HepG2 (cell line): ENCODE measurements at regions of chr14 and their contacts with region 1.

Region 1: DNA sequence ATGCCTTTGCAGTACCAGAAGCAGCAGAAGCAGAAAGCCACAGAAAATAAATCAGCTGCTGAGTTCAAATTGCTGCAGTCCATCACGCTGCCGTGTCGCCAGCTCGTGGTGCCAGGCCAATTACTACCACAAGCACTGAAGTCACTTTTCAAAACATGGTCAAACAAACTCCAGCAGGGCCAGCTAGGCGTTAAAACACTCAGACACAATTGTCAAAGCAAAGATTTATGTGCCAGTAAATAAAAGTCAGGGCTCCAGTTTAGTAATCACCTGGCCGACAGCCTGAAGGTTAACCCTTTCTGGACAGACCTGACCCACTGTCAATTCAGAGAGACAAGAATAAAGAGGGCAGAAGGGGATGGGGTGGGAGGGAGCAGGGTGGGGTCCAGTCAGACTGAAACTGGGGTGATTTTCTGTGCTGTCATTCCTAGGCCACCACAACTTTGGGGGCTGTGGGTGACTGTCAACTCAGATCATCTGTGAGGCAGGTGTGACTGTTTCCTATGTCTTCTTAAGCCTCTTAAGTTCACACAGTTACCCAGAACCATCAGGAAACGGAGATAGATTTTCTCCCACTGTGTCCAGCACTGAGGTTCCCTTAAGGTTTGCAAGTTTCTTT is 109.8 kb upstream of the FUT8 start:
- DNase-seq: no peak
- ATAC-seq: no peak; the same call in 2 of the 3 replicates
- H3K4me3 ChIP-seq: peak overlapping the region; percentile 1 to 48 (median 36); a peak in 4 of 6 replicates
- H3K27ac ChIP-seq: peak overlapping the region; percentile 39
- H3K4me1 ChIP-seq: peaks cover 57% of the 10 kb centered on the region
- H3K27me3 ChIP-seq: no peaks in the 10 kb centered on the region
- CTCF ChIP-seq: no peak
- EP300 ChIP-seq: no peak
- POLR2A ChIP-seq: no peak
- RAD21 ChIP-seq: no peak

Region 2: GRCh38 chr14:65224799-65225198 is 77.9 kb before region 1 on chr14:
- CTCF ChIA-PET with region 1: no interaction called
- POLR2A ChIA-PET with region 1: interaction called, 13 read pairs
- in situ Hi-C with region 1: no loop called
- intact Hi-C with region 1: loop called (anchors 5 kb)
- DNase-seq: no peak
- ATAC-seq: no peak
- H3K4me3 ChIP-seq: no peak overlapping the region
- H3K27ac ChIP-seq: no peak overlapping the region
- H3K4me1 ChIP-seq: peaks cover 65% of the 10 kb centered on the region
- H3K27me3 ChIP-seq: no peaks in the 10 kb centered on the region
- CTCF ChIP-seq: no peak
- EP300 ChIP-seq: no peak
- POLR2A ChIP-seq: no peak
- RAD21 ChIP-seq: no peak

Region 3: GRCh38 chr14:65229751-65230749 is 72.6 kb before region 1 on chr14:
- CTCF ChIA-PET with region 1: no interaction called
- POLR2A ChIA-PET with region 1: interaction called, 13 read pairs
- in situ Hi-C with region 1: loop called (anchors 5 kb)
- intact Hi-C with region 1: loop called (anchors 5 kb)
- DNase-seq: peak; percentile 96
- ATAC-seq: peak; percentile 44
- H3K4me3 ChIP-seq: peak overlapping the region; percentile 64 to 73 (median 67)
- H3K27ac ChIP-seq: peak overlapping the region; percentile 90
- H3K4me1 ChIP-seq: peaks cover 72% of the 10 kb centered on the region
- H3K27me3 ChIP-seq: no peaks in the 10 kb centered on the region
- CTCF ChIP-seq: no peak
- EP300 ChIP-seq: peak in 1 of 2 experiments; percentile 69; a peak in 2 of 4 replicates
- POLR2A ChIP-seq: peak; percentile 66 to 75
- RAD21 ChIP-seq: no peak

Region 4: GRCh38 chr14:65239143-65239937 is 63.3 kb before region 1 on chr14:
- CTCF ChIA-PET with region 1: no interaction called
- POLR2A ChIA-PET with region 1: interaction called, 11 read pairs
- in situ Hi-C with region 1: loop called (anchors 5 kb)
- intact Hi-C with region 1: no loop called
- DNase-seq: peak; percentile 61
- ATAC-seq: peak; percentile 50
- H3K4me3 ChIP-seq: peak overlapping the region; percentile 6 to 65 (median 40); a peak in 5 of 6 replicates
- H3K27ac ChIP-seq: peak overlapping the region; percentile 66
- H3K4me1 ChIP-seq: peaks cover 75% of the 10 kb centered on the region
- H3K27me3 ChIP-seq: no peaks in the 10 kb centered on the region
- CTCF ChIP-seq: peak; percentile 26; the same call in 1 of the 2 replicates
- EP300 ChIP-seq: no peak
- POLR2A ChIP-seq: no peak; a peak in 1 of 4 replicates
- RAD21 ChIP-seq: no peak

Region 5: DNA sequence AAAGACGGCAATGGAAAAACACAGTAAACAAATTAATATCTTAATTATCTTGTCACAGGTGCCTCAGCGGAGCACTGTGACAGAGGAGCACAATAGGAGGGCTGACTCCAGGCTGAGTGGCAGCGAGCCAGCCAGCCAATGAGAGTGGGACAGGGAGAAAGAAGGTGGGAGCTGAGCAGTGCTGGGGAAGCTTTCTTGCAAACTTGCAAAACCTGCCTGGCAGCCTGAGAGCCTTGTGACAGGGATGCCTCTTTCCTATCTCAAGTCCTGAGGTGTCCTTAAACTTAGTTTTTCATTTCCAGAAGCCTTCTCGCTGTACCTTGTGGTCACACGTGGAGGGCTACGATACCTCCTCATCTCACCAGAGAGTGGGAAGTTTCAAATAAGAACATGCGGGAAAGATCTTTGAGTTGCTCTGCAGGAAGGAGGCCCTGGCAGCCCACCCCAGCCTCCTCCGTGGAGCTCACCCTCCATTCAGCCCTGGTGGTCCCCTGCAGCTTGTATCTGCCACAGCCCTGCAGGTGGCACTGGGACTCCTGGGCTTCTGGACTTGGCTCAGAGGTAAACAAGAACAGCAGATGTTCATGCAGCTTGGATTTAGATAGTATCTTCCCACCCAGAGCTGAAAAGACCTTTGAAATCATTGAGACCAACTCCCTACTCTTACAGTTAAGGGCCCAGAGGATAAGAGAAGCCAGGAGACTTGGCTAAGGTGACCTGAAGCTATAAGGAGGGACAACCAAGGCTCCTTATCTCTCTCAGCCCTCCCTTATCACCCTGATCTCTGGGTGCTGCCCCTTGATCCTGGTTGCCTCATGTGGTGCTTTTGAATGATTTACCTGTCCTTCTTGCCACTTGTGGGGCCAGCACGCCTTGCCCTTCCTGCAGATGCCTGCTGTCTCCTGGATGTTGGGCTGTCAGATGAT is 46.9 kb before region 1 on chr14:
- CTCF ChIA-PET with region 1: no interaction called
- POLR2A ChIA-PET with region 1: interaction called, 16 read pairs
- in situ Hi-C with region 1: no loop called
- intact Hi-C with region 1: no loop called
- DNase-seq: peak; percentile 69
- ATAC-seq: peak; percentile 82
- H3K4me3 ChIP-seq: peak overlapping the region; percentile 13 to 58 (median 20); a peak in 5 of 6 replicates
- H3K27ac ChIP-seq: peak overlapping the region; percentile 57
- H3K4me1 ChIP-seq: peaks cover 59% of the 10 kb centered on the region
- H3K27me3 ChIP-seq: no peaks in the 10 kb centered on the region
- CTCF ChIP-seq: peak; percentile 67
- EP300 ChIP-seq: 0 out of 4 replicates have a peak, but pooled peaks of 1 of the 2 experiments have one; percentile 2
- POLR2A ChIP-seq: no peak
- RAD21 ChIP-seq: no peak